ENCODE measurements at regions of chr2 and their contacts with region 1.

Region 1: DNA sequence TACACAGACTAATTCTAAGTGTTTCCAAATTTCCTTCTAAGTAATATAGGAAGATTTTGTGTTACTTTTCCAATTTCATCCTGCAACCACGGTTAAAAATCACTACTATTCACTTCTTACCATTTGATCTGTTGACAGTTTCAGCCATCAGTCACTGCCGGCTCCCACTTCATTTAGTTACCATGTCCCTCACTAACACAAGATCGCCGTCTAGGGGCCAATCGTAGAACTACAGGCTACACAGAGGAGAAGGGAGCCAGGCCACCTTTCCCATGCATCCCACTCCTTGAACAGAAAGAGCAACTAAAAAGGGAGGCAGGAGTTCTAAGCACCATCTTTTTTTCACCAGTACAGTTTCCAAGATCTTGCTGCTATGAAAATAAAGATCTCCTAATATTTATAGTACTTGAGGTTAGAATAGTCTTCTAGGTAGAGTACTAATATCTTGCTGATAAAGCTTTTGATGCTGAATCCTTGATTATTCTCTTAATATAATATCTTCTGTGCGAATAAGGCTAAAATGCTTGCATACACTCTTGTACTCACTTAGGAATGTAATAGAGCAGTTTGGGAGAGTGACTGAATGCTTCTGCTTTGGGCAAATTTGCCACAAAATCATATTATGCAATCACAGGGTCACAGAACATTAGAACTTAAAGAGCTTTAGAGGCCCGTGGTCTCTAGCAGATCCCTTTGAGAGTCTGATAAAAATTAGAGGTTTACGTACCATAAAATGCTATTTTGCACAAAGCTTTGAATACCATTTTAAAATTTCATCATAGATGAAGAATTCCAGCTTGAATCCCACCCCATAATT is 39.5 kb upstream of the CYP1B1 start:
- DNase-seq: peak; percentile 65
- H3K4me3 ChIP-seq: no peak overlapping the region
- H3K27ac ChIP-seq: no peak overlapping the region
- H3K4me1 ChIP-seq: no peaks in the 10 kb centered on the region
- CTCF ChIP-seq: peak; percentile 97

Region 2: DNA sequence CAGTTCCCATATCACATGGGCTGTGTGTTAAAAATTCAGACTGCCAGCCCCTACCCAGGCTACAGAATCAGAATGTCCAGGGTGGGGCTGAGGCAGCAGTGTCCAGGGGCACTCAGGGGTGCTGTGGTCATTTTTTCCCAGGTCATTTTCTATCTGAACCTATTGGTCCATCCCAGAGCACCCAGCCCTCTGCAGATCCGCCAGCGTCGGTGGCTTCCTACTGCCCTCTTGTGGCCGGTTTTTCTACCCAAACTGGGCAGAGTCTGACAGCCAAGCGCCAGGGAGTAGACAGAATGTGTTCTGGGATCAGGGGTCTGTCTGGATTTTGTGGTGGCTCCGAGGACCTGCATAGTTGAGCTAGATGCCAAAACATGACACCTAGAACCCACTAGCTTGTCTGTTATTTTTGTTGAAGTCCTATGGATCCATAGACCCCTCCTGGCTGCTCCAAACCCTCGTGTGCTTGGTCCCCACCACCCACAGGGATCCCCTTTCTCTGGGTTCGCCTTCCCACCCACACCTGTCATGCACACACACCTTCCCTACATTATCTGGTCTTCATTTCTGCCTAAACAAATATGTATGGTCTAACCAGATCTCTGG is 224.4 kb before region 1 on chr2:
- CTCF ChIA-PET with region 1: interaction called, 3 read pairs
- POLR2A ChIA-PET with region 1: no interaction called
- intact Hi-C with region 1: loop called (anchors 1 kb)
- DNase-seq: peak; percentile 70
- H3K4me3 ChIP-seq: no peak overlapping the region
- H3K27ac ChIP-seq: no peak overlapping the region
- H3K4me1 ChIP-seq: peaks cover 18% of the 10 kb centered on the region
- CTCF ChIP-seq: peak; percentile 91

Region 3: GRCh38 chr2:37896314-37896713 is 219.1 kb before region 1 on chr2:
- CTCF ChIA-PET with region 1: no interaction called
- POLR2A ChIA-PET with region 1: no interaction called
- intact Hi-C with region 1: loop called (anchors 1 kb)
- DNase-seq: peak; percentile 39
- H3K4me3 ChIP-seq: no peak overlapping the region
- H3K27ac ChIP-seq: no peak overlapping the region
- H3K4me1 ChIP-seq: peaks cover 18% of the 10 kb centered on the region
- CTCF ChIP-seq: peak; percentile 56

Region 4: GRCh38 chr2:37982147-37982582 is 133.3 kb before region 1 on chr2:
- CTCF ChIA-PET with region 1: no interaction called
- POLR2A ChIA-PET with region 1: no interaction called
- intact Hi-C with region 1: loop called (anchors 2 kb)
- DNase-seq: peak; percentile 70
- H3K4me3 ChIP-seq: no peak overlapping the region
- H3K27ac ChIP-seq: no peak overlapping the region
- H3K4me1 ChIP-seq: no peaks in the 10 kb centered on the region
- CTCF ChIP-seq: peak; percentile 99

Region 5: GRCh38 chr2:38508311-38509039 is 393.1 kb after region 1 on chr2:
- CTCF ChIA-PET with region 1: no interaction called
- POLR2A ChIA-PET with region 1: no interaction called
- intact Hi-C with region 1: loop called (anchors 5 kb)
- DNase-seq: peak; percentile 94
- H3K4me3 ChIP-seq: no peak overlapping the region
- H3K27ac ChIP-seq: no peak overlapping the region
- H3K4me1 ChIP-seq: peaks cover 12% of the 10 kb centered on the region
- CTCF ChIP-seq: peak; percentile 98